CD4-positive, alpha-beta T cell (primary cell): ENCODE measurements at regions of chr4 and their contacts with region 1.

Region 1: DNA sequence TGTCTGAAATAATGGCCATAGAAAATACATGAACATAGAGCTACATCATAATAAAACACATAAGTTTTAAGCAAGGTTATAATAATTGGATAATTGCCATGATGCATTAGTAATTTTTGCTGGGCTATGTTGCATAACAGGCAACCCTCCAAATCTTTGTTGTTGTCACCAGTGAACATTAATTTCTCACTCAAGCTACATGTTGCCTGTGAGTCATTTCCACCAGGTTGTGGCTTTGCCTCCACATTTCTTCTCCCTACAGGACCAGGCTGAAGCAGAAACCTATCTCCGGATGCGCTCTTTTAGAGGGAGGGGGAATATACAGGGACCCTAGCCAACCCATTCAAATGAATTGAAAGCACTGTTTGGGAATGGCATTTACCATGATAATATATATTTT is 347.7 kb downstream of the GABRG1 start:
- DNase-seq: no peak
- ATAC-seq: no peak
- H3K4me3 ChIP-seq: no peak overlapping the region
- H3K4me3 Mint-ChIP-seq: no peak overlapping the region
- H3K27ac ChIP-seq: no peak overlapping the region
- H3K27ac Mint-ChIP-seq: no peak overlapping the region
- H3K4me1 ChIP-seq: no peaks in the 10 kb centered on the region
- H3K4me1 Mint-ChIP-seq: no peaks in the 10 kb centered on the region
- H3K27me3 ChIP-seq: no peaks in the 10 kb centered on the region
- H3K27me3 Mint-ChIP-seq: no peaks in the 10 kb centered on the region
- CTCF ChIP-seq: no peak

Region 2: DNA sequence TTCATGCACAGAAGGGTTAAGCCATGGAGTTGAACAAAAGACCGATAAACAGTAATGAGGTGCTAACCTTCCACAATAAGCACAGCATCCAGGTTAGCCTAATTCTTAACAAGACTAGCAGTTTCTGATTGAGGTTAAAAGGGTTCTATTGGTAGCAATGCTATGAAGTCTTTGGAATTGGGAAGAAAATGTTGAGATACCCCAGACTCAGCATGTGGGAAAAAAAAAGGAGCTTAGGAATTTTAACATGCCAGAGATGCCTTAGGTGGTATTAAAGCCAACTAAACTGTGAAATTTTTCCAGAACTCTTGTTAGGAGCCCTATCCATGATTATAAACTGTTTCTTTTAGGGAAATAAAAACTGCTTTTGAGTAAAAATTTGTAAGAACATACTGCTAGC is 44.0 kb before region 1 on chr4:
- CTCF ChIA-PET with region 1: no interaction called
- POLR2A ChIA-PET with region 1: no interaction called
- intact Hi-C with region 1: loop called in 1 of 2 experiments (anchors 5 kb)
- DNase-seq: no peak
- ATAC-seq: no peak
- H3K4me3 ChIP-seq: no peak overlapping the region
- H3K4me3 Mint-ChIP-seq: no peak overlapping the region
- H3K27ac ChIP-seq: no peak overlapping the region
- H3K27ac Mint-ChIP-seq: no peak overlapping the region
- H3K4me1 ChIP-seq: no peaks in the 10 kb centered on the region
- H3K4me1 Mint-ChIP-seq: no peaks in the 10 kb centered on the region
- H3K27me3 ChIP-seq: no peaks in the 10 kb centered on the region
- H3K27me3 Mint-ChIP-seq: no peaks in the 10 kb centered on the region
- CTCF ChIP-seq: no peak